ENCODE measurements at regions of chr3 and their contacts with region 1.

Region 1: DNA sequence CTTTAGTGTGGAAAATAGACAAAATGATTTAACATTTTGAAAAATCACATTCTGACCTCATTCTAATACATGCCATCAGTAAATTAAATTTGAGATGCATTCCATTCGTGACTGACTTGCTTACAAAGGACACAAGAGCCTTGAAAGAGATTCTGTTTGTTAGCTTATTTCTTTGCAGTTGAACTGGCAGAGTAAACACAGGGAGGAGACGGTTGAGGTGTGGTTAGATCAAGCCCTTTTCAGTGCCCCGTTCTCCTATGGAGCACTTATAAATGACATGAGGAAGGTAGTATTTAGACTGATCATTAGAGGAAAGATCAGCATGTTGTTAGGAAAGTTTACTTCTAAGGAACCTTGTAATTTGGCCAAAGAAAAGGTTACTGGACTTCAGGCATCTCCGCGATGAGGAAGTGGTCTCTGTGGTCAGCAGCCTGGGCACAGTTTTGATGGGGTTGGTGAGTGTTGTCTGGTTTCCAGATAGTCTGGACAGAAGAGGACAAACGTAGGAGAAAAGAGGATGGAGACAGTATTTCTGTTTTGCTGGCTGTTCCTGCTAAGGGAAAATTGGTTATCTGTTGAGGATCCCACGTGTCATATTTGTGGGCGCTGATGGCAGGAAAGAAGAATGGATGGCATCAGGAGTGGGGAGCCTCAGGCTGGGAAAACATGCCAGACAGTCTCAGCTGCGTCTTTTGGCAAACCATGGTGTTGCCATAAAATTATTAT is 328.9 kb upstream of the TBL1XR1 start:
- DNase-seq: no peak
- H3K4me3 ChIP-seq: no peak overlapping the region
- H3K4me3 Mint-ChIP-seq: no peak overlapping the region
- H3K27ac Mint-ChIP-seq: no peak overlapping the region
- H3K4me1 ChIP-seq: peaks cover 20% of the 10 kb centered on the region; the same call in 1 of the 2 replicates
- H3K4me1 Mint-ChIP-seq: peaks cover 8% of the 10 kb centered on the region
- H3K27me3 ChIP-seq: no peaks in the 10 kb centered on the region
- H3K27me3 Mint-ChIP-seq: no peaks in the 10 kb centered on the region
- CTCF ChIP-seq: no peak

Region 2: GRCh38 chr3:177622541-177622940 is 96.4 kb after region 1 on chr3:
- CTCF ChIA-PET with region 1: interaction called, 11 read pairs
- POLR2A ChIA-PET with region 1: no interaction called
- intact Hi-C with region 1: no loop called
- DNase-seq: peak in 1 of 2 experiments; percentile 36
- H3K4me3 ChIP-seq: no peak overlapping the region
- H3K4me3 Mint-ChIP-seq: no peak overlapping the region
- H3K27ac Mint-ChIP-seq: peak overlapping the region; percentile 25
- H3K4me1 ChIP-seq: peaks cover 21% of the 10 kb centered on the region
- H3K4me1 Mint-ChIP-seq: peaks cover 31% of the 10 kb centered on the region
- H3K27me3 ChIP-seq: no peaks in the 10 kb centered on the region
- H3K27me3 Mint-ChIP-seq: no peaks in the 10 kb centered on the region
- CTCF ChIP-seq: peak in 1 of 2 experiments; percentile 43

Region 3: DNA sequence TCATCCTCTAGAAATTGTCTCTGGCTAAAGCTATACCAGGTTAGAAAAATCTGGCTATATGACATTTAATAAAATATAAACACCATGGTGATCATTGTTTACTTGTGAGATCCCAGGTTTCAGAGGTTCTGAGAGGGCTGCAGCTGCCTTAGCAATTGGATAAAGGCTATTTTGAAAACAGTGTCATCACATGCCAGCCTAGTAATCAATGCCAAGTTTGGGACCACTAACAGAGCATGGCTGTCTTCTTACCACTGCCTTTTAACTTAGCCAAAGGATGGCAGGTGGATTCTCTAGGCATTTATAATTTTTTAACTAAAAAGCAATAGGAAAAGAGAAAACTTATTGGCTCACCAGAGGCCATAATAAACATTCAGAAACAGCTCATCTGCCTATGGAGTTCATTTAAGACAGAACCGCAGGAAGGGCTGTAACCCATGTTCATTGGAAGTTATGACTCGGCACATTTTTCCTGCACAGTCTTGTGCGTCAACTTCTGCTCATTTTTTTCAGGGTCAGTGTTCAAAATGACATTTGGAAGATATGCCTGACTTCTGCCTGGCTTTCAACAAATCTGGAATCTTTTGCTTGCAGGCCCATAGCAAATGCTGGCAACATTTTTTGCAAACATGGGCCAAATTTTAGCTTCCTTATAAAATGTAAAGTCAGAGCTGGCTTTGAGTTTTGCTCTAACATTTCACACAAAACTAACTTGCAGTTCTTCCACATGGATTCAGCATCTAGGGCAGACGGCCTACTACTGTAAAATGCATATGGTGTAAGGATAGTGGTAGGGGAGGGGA is 147.2 kb after region 1 on chr3:
- CTCF ChIA-PET with region 1: no interaction called
- POLR2A ChIA-PET with region 1: no interaction called
- intact Hi-C with region 1: loop called (anchors 2 kb)
- DNase-seq: peak in 1 of 2 experiments; percentile 8
- H3K4me3 ChIP-seq: no peak overlapping the region
- H3K4me3 Mint-ChIP-seq: peak overlapping the region; percentile 46
- H3K27ac Mint-ChIP-seq: peak overlapping the region; percentile 57
- H3K4me1 ChIP-seq: peaks cover 51% of the 10 kb centered on the region
- H3K4me1 Mint-ChIP-seq: peaks cover 30% of the 10 kb centered on the region
- H3K27me3 ChIP-seq: no peaks in the 10 kb centered on the region
- H3K27me3 Mint-ChIP-seq: no peaks in the 10 kb centered on the region
- CTCF ChIP-seq: no peak

Region 4: DNA sequence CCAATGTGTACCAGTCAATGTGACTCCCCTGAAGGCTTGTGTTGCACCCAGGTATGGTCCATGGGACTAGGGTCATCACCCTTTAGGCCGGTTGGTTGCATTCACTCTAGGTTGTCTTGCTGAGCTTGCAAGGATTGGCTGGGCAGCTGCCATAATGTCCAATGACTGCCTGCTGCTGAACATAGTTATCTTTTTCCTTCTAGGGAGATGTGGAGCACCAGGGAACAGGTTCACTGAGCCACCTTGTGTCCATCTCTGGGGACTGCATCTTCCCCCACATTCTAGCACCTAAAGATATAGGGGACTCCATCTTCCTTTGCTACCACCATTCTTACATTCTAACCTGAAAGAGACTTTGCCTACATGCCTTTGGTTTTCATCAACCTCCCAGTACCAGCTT is 251.5 kb after region 1 on chr3:
- CTCF ChIA-PET with region 1: no interaction called
- POLR2A ChIA-PET with region 1: no interaction called
- intact Hi-C with region 1: loop called (anchors 1 kb)
- DNase-seq: peak; percentile 66 to 67
- H3K4me3 ChIP-seq: no peak overlapping the region
- H3K4me3 Mint-ChIP-seq: no peak overlapping the region
- H3K27ac Mint-ChIP-seq: no peak overlapping the region
- H3K4me1 ChIP-seq: no peaks in the 10 kb centered on the region
- H3K4me1 Mint-ChIP-seq: no peaks in the 10 kb centered on the region
- H3K27me3 ChIP-seq: no peaks in the 10 kb centered on the region
- H3K27me3 Mint-ChIP-seq: no peaks in the 10 kb centered on the region
- CTCF ChIP-seq: peak; percentile 61 to 63

Region 5: DNA sequence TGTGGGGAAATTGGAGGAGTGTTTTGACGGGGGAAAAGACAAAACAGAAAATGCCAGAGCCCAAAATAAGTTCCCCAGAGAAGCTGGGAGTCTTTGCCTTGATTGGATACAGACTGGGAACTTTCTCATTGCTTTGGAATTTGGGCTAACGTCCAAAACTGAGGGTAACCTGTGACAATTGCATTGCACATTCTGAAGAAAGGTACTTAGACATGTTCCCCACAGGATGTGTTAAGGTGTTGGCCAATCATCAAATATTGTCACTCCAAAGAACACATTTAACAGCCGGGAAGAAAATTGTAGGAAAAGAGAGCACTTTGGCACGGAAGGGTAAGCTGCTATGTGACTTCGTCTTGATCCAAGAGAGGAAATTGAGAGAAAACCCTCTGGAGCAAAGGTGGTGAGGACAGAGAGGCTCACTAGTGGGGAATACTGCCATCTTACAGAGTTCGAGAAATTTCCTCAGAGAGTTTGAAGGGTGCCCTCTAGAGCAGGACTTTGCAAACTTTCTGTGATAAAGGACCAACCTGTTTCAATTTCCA is 290.6 kb after region 1 on chr3:
- CTCF ChIA-PET with region 1: no interaction called
- POLR2A ChIA-PET with region 1: no interaction called
- intact Hi-C with region 1: loop called (anchors 5 kb)
- DNase-seq: peak in 1 of 2 experiments; percentile 14
- H3K4me3 ChIP-seq: no peak overlapping the region
- H3K4me3 Mint-ChIP-seq: no peak overlapping the region
- H3K27ac Mint-ChIP-seq: no peak overlapping the region
- H3K4me1 ChIP-seq: no peaks in the 10 kb centered on the region
- H3K4me1 Mint-ChIP-seq: peaks cover 6% of the 10 kb centered on the region
- H3K27me3 ChIP-seq: no peaks in the 10 kb centered on the region
- H3K27me3 Mint-ChIP-seq: no peaks in the 10 kb centered on the region
- CTCF ChIP-seq: no peak

Region 6: GRCh38 chr3:178325330-178325729 is 799.2 kb after region 1 on chr3:
- CTCF ChIA-PET with region 1: no interaction called
- POLR2A ChIA-PET with region 1: no interaction called
- intact Hi-C with region 1: loop called (anchors 2 kb)
- DNase-seq: no peak
- H3K4me3 ChIP-seq: no peak overlapping the region
- H3K4me3 Mint-ChIP-seq: no peak overlapping the region
- H3K27ac Mint-ChIP-seq: no peak overlapping the region
- H3K4me1 ChIP-seq: peaks cover 13% of the 10 kb centered on the region
- H3K4me1 Mint-ChIP-seq: no peaks in the 10 kb centered on the region
- H3K27me3 ChIP-seq: no peaks in the 10 kb centered on the region
- H3K27me3 Mint-ChIP-seq: no peaks in the 10 kb centered on the region
- CTCF ChIP-seq: peak; percentile 19 to 34